Ascending aorta (tissue), 2 donors: ENCODE measurements at regions of chr2 and their contacts with region 1.

Region 1: DNA sequence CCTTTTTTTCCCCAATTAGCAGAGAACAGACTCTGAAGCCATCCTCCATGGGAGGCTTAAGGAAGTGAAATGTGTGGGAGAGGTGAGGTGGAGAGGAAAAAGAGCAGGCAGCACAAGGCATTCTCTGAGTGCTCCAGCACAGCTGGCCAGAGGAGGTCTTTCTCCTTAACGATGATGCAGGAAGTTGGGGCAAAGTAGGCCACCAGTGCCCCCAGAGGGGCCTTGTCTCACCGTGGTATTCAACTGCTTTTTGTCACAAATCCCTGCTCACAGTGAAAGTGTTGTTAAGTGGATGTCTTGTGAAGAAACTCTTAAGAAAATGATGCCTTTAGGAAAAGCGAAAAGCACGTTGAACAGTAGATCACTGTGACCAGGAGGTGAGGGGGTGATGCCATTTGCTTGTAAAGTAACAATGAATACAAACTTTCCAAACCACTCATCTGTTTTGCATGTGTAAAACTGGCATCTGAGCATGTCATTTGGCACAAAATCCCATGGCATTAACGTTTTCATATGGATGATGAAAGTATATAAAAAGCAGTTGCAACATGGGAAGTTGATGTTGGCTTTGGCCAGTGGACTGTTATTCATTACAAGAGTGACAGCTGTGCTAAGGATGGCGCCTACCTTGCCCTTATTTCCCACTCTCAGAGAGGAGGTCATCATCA is 49.2 kb upstream of the CDC42EP3 start:
- DNase-seq: peak in 1 of 2 donors; percentile 77
- H3K4me3 ChIP-seq: no peak overlapping the region
- H3K27ac ChIP-seq: peak overlapping the region; percentile 79 to 87
- H3K4me1 ChIP-seq: peaks cover 0 to 12% of the 10 kb centered on the region in 2 donors
- H3K27me3 ChIP-seq: no peaks in the 10 kb centered on the region
- CTCF ChIP-seq: no peak

Region 2: GRCh38 chr2:37740164-37740739 is 19.6 kb after region 1 on chr2:
- intact Hi-C with region 1: loop called (anchors 2 kb)
- DNase-seq: no peak
- H3K4me3 ChIP-seq: no peak overlapping the region
- H3K27ac ChIP-seq: no peak overlapping the region
- H3K4me1 ChIP-seq: peaks cover 0 to 24% of the 10 kb centered on the region in 2 donors
- H3K27me3 ChIP-seq: no peaks in the 10 kb centered on the region
- CTCF ChIP-seq: no peak

Region 3: DNA sequence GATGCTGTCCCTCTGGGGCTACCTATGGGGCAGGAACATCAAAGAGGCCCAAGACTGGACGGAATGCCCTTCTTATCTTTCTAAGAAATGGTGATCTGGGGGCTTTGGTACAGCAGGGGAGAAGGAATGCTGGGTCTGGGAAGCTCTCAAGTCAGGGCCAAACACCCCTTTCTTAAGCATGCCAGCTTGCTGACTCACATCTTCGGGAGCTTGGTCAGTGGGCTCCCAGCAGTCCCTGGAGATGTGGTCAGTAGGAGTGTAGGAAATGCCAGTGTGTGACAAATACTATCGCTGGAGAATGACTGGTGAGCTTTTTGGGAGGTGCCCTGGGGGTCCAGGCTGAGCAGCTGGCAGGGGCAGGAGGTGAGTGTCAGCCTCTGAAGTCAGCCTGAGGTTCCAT is 55.8 kb after region 1 on chr2:
- intact Hi-C with region 1: loop called (anchors 5 kb)
- DNase-seq: peak; percentile 29 to 83
- H3K4me3 ChIP-seq: no peak overlapping the region
- H3K27ac ChIP-seq: peak overlapping the region; percentile 87 to 90
- H3K4me1 ChIP-seq: peaks cover 3 to 31% of the 10 kb centered on the region in 2 donors
- H3K27me3 ChIP-seq: no peaks in the 10 kb centered on the region
- CTCF ChIP-seq: no peak